ENCODE measurements at regions of chr17 and their contacts with region 1.

Region 1: DNA sequence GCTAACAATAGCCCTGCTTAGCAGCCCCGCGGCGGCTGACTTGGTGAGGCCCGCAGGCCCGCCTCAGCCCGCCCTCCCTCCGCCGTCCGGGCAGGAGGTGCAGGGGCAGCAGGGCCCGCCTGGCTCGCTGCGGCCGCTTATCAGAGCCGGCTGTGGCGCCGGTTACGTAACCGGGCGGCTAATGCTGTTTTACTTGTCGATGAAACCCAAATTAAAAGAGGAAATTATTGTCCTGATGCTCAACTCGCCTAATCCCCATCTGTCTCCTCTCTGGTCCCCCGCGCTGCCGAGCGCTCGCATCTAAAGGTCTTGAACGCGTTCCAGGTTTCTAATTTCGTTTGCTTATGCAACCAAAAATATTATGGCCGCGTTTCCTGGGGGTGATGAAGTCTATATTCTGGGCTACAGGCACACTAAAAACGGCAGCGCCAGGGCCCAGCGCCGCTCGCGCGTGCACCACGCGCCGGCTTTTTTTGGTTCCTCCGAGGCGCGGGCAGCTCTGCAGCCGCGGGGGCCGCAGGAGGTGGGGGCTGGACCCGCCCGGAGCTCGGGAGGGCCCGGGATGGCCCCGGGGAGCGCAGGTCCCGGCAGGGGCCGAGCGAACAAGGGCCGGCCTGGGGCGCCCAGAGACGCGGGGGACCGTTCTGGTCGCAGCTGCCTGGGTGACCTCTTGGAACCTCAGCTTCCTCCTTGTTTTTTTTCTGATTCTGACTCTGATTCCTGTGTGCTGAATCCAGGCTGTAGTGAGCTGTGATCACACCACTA is 65.2 kb upstream of the TOB1 start:
- DNase-seq: no peak
- H3K4me3 ChIP-seq: peak overlapping the region; percentile 42
- CTCF ChIP-seq: no peak

Region 2: GRCh38 chr17:50949989-50950881 is 18.9 kb after region 1 on chr17:
- CTCF ChIA-PET with region 1: interaction called, 18 read pairs
- POLR2A ChIA-PET with region 1: interaction called, 3 read pairs
- DNase-seq: peak; percentile 63
- H3K4me3 ChIP-seq: peak overlapping the region; percentile 23; the same call in 1 of the 2 replicates
- CTCF ChIP-seq: peak; percentile 79

Region 3: DNA sequence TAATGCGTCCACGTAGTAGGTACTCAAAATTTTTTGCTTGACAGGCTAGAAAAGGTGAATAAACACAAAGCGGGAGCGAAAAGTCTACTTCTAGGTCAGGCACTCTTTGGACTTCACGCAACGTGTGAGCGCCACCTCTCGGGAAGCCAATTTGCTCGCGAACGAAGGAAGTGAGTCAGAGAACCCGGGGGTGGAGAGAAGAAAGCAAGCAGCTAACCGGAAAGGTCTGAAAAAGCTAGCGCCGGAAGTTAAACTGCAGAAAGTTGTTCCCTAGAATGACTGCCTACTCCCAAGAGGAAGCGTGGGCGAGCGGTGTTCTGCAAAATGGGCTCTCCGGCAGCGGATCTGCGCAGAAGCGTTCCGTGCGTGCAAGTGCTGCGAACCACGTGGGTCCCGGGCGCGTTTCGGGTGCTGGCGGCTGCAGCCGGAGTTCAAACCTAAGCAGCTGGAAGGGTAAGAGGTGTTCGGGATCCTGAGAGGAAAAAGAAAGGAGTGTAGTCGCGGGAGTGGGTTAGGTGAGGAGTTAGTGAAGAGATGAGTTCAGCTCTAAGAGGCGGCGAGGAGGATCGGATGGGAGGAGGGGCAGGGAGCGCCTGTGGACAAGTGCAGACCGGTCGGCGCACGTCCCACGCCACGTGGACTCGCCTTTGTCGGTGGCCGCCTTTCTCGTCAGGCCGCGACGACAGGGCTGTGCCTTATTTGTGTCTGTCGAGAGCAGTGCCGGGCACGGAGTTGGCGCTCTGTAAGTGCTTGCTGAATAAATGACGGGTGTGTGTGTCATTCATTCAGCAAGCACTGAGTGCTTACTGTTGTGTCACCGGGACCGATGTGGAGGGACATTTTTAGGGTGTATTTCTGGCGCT is 222.1 kb after region 1 on chr17 and contains the start of gene NME1:
- CTCF ChIA-PET with region 1: no interaction called
- POLR2A ChIA-PET with region 1: no interaction called
- DNase-seq: peak; percentile 98
- H3K4me3 ChIP-seq: peak within 1 kb of the TSS; percentile 93
- CTCF ChIP-seq: peak; percentile 81